GM18951 (cell line): ENCODE measurements at regions of chr1 and their contacts with region 1.

Region 1: DNA sequence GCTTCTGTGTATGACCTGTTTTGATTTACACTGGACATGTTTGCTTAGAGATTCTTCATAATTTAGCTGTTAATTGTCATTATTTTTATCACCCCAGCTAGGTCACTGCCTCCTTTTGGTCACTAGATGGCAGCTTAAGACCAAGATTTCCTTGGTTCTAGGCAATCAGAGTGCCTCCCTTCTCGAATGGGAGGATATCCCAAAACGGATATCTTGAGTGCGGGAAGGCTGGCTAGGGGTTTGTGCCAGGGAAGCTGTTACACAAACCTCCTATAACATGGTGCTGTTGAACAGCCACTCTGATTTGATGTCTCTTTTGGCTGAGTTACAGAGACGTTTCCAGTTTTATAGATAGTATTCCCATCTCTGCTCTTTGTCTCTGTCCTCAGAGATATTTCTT is 283.5 kb downstream of the S1PR1 start:
- POLR2A ChIP-seq: no peak

Region 2: GRCh38 chr1:101330427-101331130 is 189.7 kb before region 1 on chr1:
- in situ Hi-C with region 1: no loop called
- POLR2A ChIP-seq: no peak

Region 3: DNA sequence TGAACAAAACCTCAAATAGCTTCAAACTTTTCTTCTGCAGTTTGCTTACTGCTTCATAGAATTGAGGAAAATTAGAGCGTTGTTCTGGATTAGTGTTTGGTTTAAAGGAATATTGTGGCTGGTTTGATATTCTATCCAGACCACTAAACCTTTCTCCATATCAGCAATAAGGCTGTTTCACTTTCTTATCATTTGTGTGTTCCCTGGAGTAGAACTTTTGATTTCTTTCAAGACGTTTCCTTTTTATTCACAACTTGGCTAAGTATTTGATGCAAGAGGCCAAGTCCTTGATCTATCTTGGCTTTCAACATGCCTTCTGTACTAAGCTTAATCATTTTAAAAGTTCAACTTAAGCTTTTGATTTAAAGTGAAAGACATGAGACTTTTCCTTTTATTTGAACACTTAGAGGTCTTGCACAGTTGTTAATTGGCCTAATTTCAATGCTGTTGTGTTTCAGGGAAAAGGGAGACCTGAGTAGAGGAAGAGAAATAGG is 75.6 kb after region 1 on chr1:
- in situ Hi-C with region 1: no loop called
- POLR2A ChIP-seq: no peak

Region 4: DNA sequence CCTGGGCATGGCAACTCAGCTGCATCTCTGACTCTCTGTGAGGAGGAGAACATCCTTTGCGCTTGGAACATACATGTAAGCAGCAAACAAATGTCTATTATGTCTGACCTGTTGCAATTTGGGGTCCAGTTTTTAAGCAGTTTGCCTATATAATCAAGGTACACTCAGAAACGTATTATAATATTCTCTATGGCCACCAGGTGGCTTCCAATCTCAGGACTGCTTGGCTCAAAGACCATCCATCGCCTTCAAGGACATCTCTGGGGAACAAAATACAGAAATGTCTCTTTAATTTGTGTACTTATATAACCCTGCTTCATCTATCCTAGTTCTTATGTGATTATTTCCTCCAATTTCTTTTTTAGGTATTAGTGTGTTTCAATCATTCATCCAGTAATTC is 249.2 kb after region 1 on chr1:
- in situ Hi-C with region 1: loop called (anchors 25 kb)
- POLR2A ChIP-seq: no peak

Region 5: GRCh38 chr1:102434421-102434820 is 914.1 kb after region 1 on chr1:
- in situ Hi-C with region 1: loop called (anchors 25 kb)
- POLR2A ChIP-seq: no peak